CD4-positive, alpha-beta T cell (primary cell): ENCODE measurements at regions of chr1 and their contacts with region 1.

Region 1: DNA sequence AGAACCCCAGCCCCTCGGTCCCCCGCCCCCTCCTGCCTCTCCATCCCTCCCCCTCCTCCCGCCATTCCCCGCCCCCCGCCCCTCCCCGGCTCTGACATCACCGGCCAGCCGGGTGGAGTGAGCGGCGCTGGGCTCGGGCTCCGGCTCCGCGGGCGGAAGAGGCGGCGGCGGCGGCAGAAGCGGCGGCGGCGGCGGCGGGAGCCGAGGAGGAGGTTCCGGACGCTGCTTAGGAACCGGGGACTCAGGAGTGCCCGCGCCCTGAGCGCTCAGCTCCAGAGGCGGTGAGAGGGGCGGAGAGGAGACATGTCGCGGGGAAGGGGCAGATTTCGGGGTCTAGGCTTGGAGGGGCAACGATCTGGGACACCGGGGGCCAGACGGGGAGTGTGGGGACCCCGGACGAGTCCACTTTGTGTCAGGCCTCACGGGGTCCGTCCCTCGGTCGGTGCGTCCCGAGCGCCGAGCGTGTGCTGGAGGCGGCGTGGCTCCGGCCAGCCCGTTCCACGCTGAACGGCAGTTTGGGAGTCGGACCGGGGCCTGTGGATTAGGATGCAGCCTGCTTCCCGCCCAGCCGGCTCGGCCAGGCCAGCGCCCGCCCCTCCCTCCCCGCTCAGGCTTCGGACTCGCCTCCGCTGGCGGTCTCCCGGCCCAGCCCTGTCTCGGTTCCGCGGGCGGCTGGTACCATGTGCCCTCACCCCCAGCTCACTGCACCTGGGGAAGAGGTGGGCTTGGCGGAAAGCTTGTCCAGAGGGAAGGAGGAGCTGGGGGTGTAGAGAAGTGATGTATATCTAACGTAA is at the start of gene PEA15:
- DNase-seq: peak; percentile 30 to 85 (median 66)
- ATAC-seq: peak; percentile 80
- H3K4me3 ChIP-seq: peak within 1 kb of the TSS; percentile 97
- H3K4me3 Mint-ChIP-seq: peak within 1 kb of the TSS; percentile 93
- H3K27ac ChIP-seq: peak within 1 kb of the TSS; percentile 33 to 71
- H3K27ac Mint-ChIP-seq: peak within 1 kb of the TSS; percentile 76
- H3K4me1 ChIP-seq: peaks cover 42% of the 10 kb centered on the region
- H3K4me1 Mint-ChIP-seq: peaks cover 42% of the 10 kb centered on the region
- H3K27me3 ChIP-seq: no peaks in the 10 kb centered on the region
- H3K27me3 Mint-ChIP-seq: no peaks in the 10 kb centered on the region
- CTCF ChIP-seq: no peak
- total RNA-seq, gene PEA15: 9.4 to 10.3 TPM

Region 2: GRCh38 chr1:160159493-160160245 is 45.8 kb before region 1 on chr1:
- CTCF ChIA-PET with region 1: no interaction called
- POLR2A ChIA-PET with region 1: no interaction called
- intact Hi-C with region 1: no loop called
- DNase-seq: no peak
- ATAC-seq: no peak
- H3K4me3 ChIP-seq: no peak overlapping the region
- H3K4me3 Mint-ChIP-seq: no peak overlapping the region
- H3K27ac ChIP-seq: no peak overlapping the region
- H3K27ac Mint-ChIP-seq: no peak overlapping the region
- H3K4me1 ChIP-seq: no peaks in the 10 kb centered on the region
- H3K4me1 Mint-ChIP-seq: no peaks in the 10 kb centered on the region
- H3K27me3 ChIP-seq: no peaks in the 10 kb centered on the region
- H3K27me3 Mint-ChIP-seq: peaks cover 14% of the 10 kb centered on the region
- CTCF ChIP-seq: no peak

Region 3: DNA sequence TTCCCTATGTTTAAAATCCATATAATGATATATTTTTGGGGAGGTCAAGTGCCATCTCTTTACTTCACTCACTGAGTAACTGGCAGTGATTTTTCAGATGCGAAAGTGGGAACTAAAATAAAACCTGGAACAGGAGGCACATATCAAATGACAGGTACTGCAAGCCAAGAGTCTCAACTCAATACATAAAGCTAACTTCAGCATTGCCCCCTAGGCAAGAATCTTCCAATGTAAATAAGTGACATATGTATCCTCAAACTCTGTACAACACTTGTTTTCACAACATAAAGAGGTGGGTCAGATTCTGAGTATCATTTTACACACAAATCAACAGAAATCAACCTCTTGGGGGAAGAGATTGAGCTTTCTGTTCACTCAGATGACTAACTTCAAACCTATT is 38.8 kb after region 1 on chr1:
- CTCF ChIA-PET with region 1: interaction called, 3 read pairs
- POLR2A ChIA-PET with region 1: no interaction called
- intact Hi-C with region 1: loop called in 1 of 2 experiments (anchors 2 kb)
- DNase-seq: no peak
- ATAC-seq: no peak
- H3K4me3 ChIP-seq: no peak overlapping the region
- H3K4me3 Mint-ChIP-seq: no peak overlapping the region
- H3K27ac ChIP-seq: no peak overlapping the region
- H3K27ac Mint-ChIP-seq: no peak overlapping the region
- H3K4me1 ChIP-seq: peaks cover 4% of the 10 kb centered on the region
- H3K4me1 Mint-ChIP-seq: peaks cover 23% of the 10 kb centered on the region
- H3K27me3 ChIP-seq: no peaks in the 10 kb centered on the region
- H3K27me3 Mint-ChIP-seq: no peaks in the 10 kb centered on the region
- CTCF ChIP-seq: no peak